Calu3 (cell line): ENCODE measurements at regions of chr15 and their contacts with region 1.

Region 1: DNA sequence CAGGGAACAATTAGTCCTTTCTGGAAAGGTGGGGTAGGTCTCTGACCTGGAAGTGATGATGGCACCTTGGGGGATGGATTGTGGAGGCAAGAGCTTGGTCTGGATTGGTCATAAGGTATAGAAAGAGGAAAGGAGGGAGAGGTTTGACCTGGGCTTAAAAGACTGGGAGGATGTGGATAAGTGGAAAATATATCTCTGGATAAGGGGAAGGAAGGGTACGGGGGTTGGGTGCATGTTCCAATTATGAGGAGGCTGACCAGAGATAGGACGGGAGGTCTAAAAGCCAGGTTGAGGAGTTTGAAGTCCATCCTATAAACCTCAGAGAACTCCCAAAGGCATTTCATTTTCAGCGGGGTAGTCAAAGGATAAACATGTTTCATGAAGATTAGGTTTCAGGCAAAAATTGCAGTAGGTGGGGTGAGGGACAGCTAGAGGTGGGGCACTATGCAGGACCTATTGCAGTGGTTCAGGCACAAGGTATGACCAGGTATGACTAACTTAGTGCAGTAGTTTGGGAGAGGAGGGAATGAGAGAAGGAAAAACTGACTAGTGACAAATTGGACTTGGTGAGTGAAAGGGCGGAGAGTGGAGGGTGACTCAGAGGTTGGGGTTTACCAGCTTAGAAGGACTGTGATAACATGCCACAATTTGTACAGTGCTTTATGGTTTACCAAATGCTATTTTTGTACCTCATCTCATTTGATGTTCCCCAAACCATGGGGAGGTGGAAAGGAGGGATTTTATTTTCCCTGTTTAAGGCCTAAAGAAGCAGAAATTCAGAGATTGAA is 10.7 kb downstream of the PDE8A start:
- DNase-seq: peak; percentile 65
- H3K4me3 Mint-ChIP-seq: peak overlapping the region; percentile 9
- H3K27ac Mint-ChIP-seq: peak overlapping the region; percentile 37
- H3K4me1 Mint-ChIP-seq: peaks cover 52% of the 10 kb centered on the region
- H3K27me3 Mint-ChIP-seq: no peaks in the 10 kb centered on the region
- CTCF ChIP-seq: no peak

Region 2: DNA sequence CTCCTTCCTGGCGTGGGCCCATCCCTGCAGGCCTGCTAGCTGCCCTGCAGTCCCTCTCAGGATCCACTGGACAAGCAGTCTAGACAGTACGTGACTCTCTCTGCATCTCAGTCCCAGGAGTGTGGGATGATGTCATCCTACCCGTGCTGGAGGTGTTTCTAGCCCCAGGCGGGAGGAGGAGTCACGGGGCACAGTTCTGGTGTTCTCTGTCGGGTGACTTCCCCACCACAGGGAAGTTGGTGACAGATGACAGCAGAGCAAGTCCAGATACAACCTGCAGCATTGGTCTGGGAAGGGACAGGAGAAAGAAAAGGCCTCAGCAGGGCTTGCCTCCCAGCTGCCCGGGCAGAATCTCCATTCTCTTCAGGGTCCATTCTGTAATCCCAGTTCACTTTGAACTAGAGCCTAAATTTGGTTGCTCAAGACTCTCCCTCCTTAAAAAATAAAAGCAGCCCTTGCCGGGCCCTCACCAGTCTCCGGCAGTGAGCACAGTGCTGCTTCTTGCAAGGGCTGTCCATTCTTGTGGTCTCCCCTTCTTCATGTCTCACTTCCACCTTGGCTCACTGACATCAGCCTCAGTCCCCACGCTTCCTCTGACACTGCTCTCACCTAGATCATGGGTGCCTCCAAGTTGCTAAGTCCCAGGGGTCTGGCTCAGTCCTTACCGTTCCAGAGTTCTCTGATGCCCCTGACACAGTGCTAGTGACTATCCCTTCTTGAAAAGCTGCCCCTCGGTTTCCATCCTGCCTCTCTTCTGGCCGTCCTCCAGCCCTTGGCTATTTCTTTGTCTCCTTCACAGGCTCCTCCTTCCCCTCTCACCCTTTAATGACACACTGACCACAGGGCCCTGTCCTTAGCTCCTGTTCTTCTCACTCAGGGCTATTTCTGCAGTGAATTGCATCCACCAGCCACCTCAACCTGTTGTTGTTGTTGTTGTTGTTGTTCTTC is 77.1 kb before region 1 on chr15:
- CTCF ChIA-PET with region 1: no interaction called
- intact Hi-C with region 1: no loop called
- DNase-seq: peak; percentile 97
- H3K4me3 Mint-ChIP-seq: peak overlapping the region; percentile 36
- H3K27ac Mint-ChIP-seq: peak overlapping the region; percentile 89
- H3K4me1 Mint-ChIP-seq: peaks cover 55% of the 10 kb centered on the region
- H3K27me3 Mint-ChIP-seq: no peaks in the 10 kb centered on the region
- CTCF ChIP-seq: no peak

Region 3: GRCh38 chr15:85030301-85031049 is 38.1 kb after region 1 on chr15:
- CTCF ChIA-PET with region 1: interaction called, 4 read pairs
- intact Hi-C with region 1: loop called (anchors 2 kb)
- DNase-seq: no peak
- H3K4me3 Mint-ChIP-seq: peak overlapping the region; percentile 24
- H3K27ac Mint-ChIP-seq: peak overlapping the region; percentile 72
- H3K4me1 Mint-ChIP-seq: peaks cover 68% of the 10 kb centered on the region
- H3K27me3 Mint-ChIP-seq: no peaks in the 10 kb centered on the region
- CTCF ChIP-seq: no peak